ENCODE measurements at regions of chr10 and their contacts with region 1.

Region 1: GRCh38 chr10:96395931-96396877 is 37.4 kb upstream of the OPALIN start:
- DNase-seq: peak; percentile 76
- H3K4me3 Mint-ChIP-seq: no peak overlapping the region
- H3K27ac Mint-ChIP-seq: no peak overlapping the region
- H3K4me1 Mint-ChIP-seq: peaks cover 3% of the 10 kb centered on the region
- H3K27me3 Mint-ChIP-seq: peaks cover 58% of the 10 kb centered on the region

Region 2: GRCh38 chr10:96271016-96271829 is 125.0 kb before region 1 on chr10 and contains the start of gene BLNK:
- CTCF ChIA-PET with region 1: no interaction called
- DNase-seq: no peak
- H3K4me3 Mint-ChIP-seq: no peak within 1 kb of the TSS
- H3K27ac Mint-ChIP-seq: no peak within 1 kb of the TSS
- H3K4me1 Mint-ChIP-seq: no peaks in the 10 kb centered on the region
- H3K27me3 Mint-ChIP-seq: peaks cover 10% of the 10 kb centered on the region

Region 3: DNA sequence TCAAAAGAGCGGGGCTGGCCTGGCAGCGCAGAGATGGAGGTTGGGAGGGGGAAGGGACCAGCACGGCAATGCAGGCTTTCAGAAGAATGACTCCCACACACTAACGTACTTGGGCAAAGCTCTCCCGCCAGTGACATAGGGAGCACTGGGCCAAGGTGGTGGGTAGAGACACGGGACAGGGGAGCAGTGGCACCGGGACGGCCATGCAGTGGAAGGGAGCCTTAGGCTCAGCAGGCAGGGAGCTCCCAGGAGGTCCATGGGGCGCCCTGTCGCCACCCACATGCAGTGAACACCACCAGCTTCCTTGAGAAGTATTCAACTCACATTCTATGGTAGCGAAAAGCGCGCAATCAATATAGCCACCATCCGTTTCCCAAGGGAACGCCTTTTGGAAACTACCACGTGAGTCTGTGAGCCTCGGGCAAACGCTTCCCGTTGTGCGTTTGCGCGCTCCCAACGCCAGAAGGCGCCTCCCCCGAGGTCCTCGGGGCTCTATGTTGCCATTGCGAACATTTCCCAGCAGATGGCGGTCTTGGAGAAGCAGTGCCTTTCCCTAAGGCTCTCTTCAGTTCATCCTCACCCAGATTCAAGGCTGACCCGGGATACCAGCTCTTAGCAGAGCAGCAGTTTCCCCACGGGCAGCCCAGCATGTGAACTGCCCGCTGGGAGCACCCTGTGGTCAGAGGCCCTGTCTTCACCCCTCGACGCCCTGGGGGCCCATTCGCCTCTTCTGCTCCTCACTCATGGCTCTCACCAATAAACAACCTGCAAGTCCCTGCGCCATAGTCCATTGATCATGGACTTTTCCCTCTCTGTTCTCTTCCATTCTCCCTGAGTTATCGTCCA is 21.0 kb before region 1 on chr10:
- CTCF ChIA-PET with region 1: interaction called, 12 read pairs
- DNase-seq: peak; percentile 81
- H3K4me3 Mint-ChIP-seq: peak overlapping the region; percentile 62
- H3K27ac Mint-ChIP-seq: no peak overlapping the region
- H3K4me1 Mint-ChIP-seq: peaks cover 11% of the 10 kb centered on the region
- H3K27me3 Mint-ChIP-seq: peaks cover 41% of the 10 kb centered on the region

Measured in activated naive CD4-positive, alpha-beta T cell treated with anti-CD3 and anti-CD28 coated beads, Interleukin-2, amount 10 ng/mL, durations not matched to agents 7 days and 5 days (primary cell).